ENCODE measurements at regions of chr12 and their contacts with region 1.

Region 1: GRCh38 chr12:124863416-124864325 is at the start of gene SCARB1:
- DNase-seq: peak; percentile 66
- ATAC-seq: peak; percentile 91
- H3K4me3 ChIP-seq: peak within 1 kb of the TSS; percentile 76 to 94 (median 85)
- H3K27ac ChIP-seq: peak within 1 kb of the TSS; percentile 72
- H3K4me1 ChIP-seq: peaks cover 77% of the 10 kb centered on the region
- H3K27me3 ChIP-seq: no peaks in the 10 kb centered on the region; a peak in 1 of 5 replicates
- CTCF ChIP-seq: peak; percentile 62
- EP300 ChIP-seq: no peak
- POLR2A ChIP-seq: peak; percentile 89 to 98
- RAD21 ChIP-seq: peak; percentile 70
- total RNA-seq, gene SCARB1: 33.2 and 63.4 TPM in 2 replicates

Region 2: DNA sequence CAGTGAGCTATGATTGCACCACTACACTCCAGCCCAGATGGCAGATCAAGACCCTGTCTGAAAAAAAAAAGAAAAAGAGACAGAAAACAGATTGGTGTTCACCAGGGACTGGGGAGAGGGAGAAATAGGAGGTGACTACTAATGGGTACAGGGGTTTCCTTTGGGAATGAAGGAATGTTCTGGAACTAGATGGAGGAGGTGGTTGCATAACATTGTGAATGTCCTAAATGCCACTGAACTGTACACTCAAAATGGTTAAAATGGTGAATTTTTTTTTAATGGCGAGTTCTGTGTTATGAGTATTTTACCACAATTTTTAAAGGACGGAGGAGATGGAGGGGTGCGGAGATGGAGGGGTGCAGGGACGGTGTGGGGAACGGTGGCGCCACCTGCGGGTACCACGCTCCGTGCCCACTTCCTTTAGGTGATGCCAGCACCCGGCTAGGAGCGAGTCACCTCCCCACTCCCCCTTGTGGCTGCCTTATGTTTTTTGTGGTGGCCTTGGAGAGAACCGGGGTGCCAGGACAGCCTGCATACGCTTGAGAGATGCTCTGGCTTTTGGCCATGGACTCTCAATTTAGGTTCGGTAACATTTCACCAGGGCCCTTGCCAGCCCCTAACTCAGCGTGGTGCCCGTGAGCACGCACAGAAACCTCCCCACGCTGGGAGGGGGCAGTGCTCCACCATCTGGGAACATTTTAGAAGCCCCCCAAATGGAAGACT is 34.7 kb after region 1 on chr12:
- CTCF ChIA-PET with region 1: interaction called, 18 read pairs
- POLR2A ChIA-PET with region 1: interaction called, 16 read pairs
- in situ Hi-C with region 1: no loop called
- intact Hi-C with region 1: loop called (anchors 2 kb)
- DNase-seq: peak; percentile 63
- ATAC-seq: peak; percentile 60
- H3K4me3 ChIP-seq: no peak overlapping the region
- H3K27ac ChIP-seq: no peak overlapping the region
- H3K4me1 ChIP-seq: peaks cover 85% of the 10 kb centered on the region
- H3K27me3 ChIP-seq: no peaks in the 10 kb centered on the region
- CTCF ChIP-seq: peak; percentile 85
- EP300 ChIP-seq: no peak
- POLR2A ChIP-seq: no peak
- RAD21 ChIP-seq: peak; percentile 88

Region 3: DNA sequence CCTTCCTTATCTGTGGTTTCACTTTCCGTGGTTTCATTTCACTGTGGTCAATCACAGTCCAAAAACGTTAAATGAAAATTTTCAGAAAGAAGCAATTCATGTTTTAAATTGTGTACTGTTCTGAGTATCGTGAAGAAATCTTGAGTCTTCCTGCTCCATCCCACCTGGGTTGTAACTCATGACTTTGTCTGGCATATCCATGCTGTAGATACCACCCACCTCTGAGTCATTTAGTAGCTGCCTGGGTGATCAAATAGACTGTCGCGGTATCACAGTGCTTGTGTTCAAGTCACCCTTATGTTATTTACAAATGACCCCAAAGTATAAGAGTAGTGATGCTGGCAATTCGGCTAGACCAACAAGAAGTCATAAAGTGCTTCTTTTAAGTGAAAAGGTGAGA is 722.8 kb after region 1 on chr12:
- CTCF ChIA-PET with region 1: no interaction called
- POLR2A ChIA-PET with region 1: no interaction called
- in situ Hi-C with region 1: no loop called
- intact Hi-C with region 1: no loop called
- DNase-seq: no peak
- ATAC-seq: no peak
- H3K4me3 ChIP-seq: no peak overlapping the region
- H3K27ac ChIP-seq: no peak overlapping the region
- H3K4me1 ChIP-seq: no peaks in the 10 kb centered on the region
- H3K27me3 ChIP-seq: no peaks in the 10 kb centered on the region
- CTCF ChIP-seq: no peak
- EP300 ChIP-seq: no peak
- POLR2A ChIP-seq: no peak
- RAD21 ChIP-seq: no peak